ENCODE measurements at regions of chr3 and their contacts with region 1.

Region 1: GRCh38 chr3:160003520-160004128 is 15.0 kb downstream of the IL12A start:
- DNase-seq: peak; percentile 31
- ATAC-seq: peak; percentile 64
- H3K4me3 ChIP-seq: no peak overlapping the region
- H3K27ac ChIP-seq: no peak overlapping the region
- H3K4me1 ChIP-seq: 0 out of 2 replicates have a peak, but pooled peaks cover 1% of the 10 kb centered on the region
- H3K27me3 ChIP-seq: no peaks in the 10 kb centered on the region
- CTCF ChIP-seq: peak; percentile 51
- POLR2A ChIP-seq: no peak
- RAD21 ChIP-seq: peak; percentile 59

Region 2: DNA sequence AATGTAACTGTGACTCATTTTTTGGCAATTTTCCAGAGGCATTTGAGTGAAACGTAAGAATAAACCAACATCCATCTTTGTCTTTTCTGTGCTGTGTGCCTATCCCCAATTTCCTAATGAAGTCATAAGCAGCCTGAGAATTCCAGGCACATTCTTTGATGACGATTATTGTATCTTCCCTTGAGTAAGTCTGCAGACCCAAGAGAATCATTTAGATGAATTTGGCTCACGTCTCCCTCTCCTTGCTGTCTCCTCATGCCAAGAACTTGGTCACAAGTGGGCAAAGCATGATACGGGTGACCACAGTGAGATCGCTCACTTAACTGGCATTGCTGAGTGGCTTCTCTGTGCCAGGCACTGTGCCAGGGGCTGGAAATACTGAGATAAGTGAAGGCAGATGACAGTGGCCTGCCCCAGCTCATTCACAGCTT is 399.5 kb before region 1 on chr3:
- CTCF ChIA-PET with region 1: no interaction called
- POLR2A ChIA-PET with region 1: no interaction called
- dilution Hi-C with region 1: no loop called
- in situ Hi-C with region 1: loop called (anchors 10 kb)
- intact Hi-C with region 1: no loop called
- DNase-seq: peak; percentile 68
- ATAC-seq: peak; percentile 49; the same call in 1 of the 2 replicates
- H3K4me3 ChIP-seq: no peak overlapping the region
- H3K27ac ChIP-seq: no peak overlapping the region; the same call in 1 of the 2 replicates
- H3K4me1 ChIP-seq: peaks cover 2% of the 10 kb centered on the region; the same call in 1 of the 2 replicates
- H3K27me3 ChIP-seq: no peaks in the 10 kb centered on the region
- CTCF ChIP-seq: no peak
- POLR2A ChIP-seq: no peak
- RAD21 ChIP-seq: no peak

Region 3: GRCh38 chr3:159828542-159828943 is 175.1 kb before region 1 on chr3:
- CTCF ChIA-PET with region 1: interaction called, 35 read pairs
- POLR2A ChIA-PET with region 1: interaction called, 3 read pairs
- dilution Hi-C with region 1: no loop called
- in situ Hi-C with region 1: loop called (anchors 5 kb)
- intact Hi-C with region 1: loop called (anchors 1 kb)
- DNase-seq: peak; percentile 68
- ATAC-seq: peak; percentile 70
- H3K4me3 ChIP-seq: no peak overlapping the region
- H3K27ac ChIP-seq: 0 out of 2 replicates have a peak overlapping the region, but pooled peaks have one; percentile 65
- H3K4me1 ChIP-seq: peaks cover 15% of the 10 kb centered on the region
- H3K27me3 ChIP-seq: no peaks in the 10 kb centered on the region
- CTCF ChIP-seq: peak; percentile 60
- POLR2A ChIP-seq: no peak
- RAD21 ChIP-seq: peak; percentile 69

Region 4: DNA sequence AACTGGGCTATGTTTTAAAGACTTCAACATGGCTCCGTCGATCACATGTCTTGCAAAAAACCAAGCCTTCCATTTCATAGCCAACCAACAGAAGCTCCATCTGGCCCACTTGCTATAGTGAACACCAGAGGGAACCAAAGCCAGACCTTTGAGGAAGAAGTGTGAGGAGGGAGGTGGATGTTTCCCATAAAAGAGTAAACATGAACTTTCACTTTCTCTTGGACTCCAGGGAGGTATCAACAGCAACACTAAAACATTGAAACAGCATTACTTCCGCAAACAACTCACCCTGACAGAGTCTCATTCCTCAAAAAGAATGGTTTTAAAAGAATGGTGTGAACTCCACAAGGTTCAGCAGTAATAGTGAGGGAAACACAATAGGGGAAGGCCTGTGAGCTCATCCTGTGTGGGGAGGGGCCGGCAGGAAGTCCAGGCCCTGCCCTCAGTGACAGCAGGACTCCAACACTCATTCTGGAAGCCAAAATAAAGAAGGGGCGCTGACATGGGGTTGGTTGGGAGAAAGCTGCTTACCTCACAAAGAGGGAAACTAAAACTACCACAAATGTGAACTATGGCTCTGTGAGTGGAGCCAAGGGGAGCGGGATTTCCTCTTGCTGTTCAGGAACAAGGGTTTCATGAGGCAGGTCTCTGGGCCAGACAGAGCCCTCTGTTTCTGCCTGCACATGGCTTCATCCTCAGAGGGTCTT is 74.0 kb before region 1 on chr3:
- CTCF ChIA-PET with region 1: interaction called, 22 read pairs
- POLR2A ChIA-PET with region 1: interaction called, 5 read pairs
- dilution Hi-C with region 1: no loop called
- in situ Hi-C with region 1: no loop called
- intact Hi-C with region 1: loop called (anchors 1 kb)
- DNase-seq: peak; percentile 87
- ATAC-seq: peak; percentile 41
- H3K4me3 ChIP-seq: no peak overlapping the region
- H3K27ac ChIP-seq: peak overlapping the region; percentile 93
- H3K4me1 ChIP-seq: peaks cover 24% of the 10 kb centered on the region
- H3K27me3 ChIP-seq: no peaks in the 10 kb centered on the region
- CTCF ChIP-seq: peak; percentile 67
- POLR2A ChIP-seq: no peak
- RAD21 ChIP-seq: peak; percentile 72

Region 5: DNA sequence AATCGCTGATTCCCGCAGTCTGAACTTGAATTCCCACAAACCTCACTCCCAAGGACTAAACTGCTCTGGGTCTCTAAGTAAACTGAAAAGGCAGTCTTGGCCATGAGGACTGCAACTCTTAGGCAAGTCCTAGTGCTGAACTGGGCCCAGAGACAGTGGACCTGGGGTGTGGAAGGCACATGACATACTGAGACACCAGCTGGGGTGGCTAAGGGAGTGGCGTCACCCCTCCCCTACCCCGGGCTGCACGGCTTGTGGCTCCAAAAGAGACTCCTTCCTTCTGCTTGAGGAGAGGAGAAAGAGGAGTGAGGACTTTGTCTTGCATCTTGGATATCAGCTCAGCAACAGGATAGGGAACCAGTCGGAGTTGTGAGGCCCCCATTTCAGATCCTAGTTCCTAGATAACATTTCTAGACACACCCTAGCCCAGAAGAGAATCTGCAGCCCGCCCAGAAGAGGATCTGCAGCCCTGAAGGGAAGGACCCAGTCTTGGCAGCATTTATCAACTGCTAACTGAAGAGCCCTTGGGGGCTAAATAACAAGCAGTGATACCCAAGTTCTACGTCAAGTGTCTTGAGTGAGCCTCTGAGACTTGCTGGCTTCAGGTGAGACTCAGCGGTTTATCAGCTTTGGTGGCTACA is 110.9 kb after region 1 on chr3:
- CTCF ChIA-PET with region 1: no interaction called
- POLR2A ChIA-PET with region 1: no interaction called
- dilution Hi-C with region 1: no loop called
- in situ Hi-C with region 1: no loop called
- intact Hi-C with region 1: no loop called
- DNase-seq: no peak
- ATAC-seq: no peak
- H3K4me3 ChIP-seq: no peak overlapping the region
- H3K27ac ChIP-seq: no peak overlapping the region
- H3K4me1 ChIP-seq: no peaks in the 10 kb centered on the region
- H3K27me3 ChIP-seq: peaks cover 9% of the 10 kb centered on the region
- CTCF ChIP-seq: no peak
- POLR2A ChIP-seq: no peak
- RAD21 ChIP-seq: no peak